Left ventricle myocardium inferior (tissue), 1 donor: ENCODE measurements at regions of chr1 and their contacts with region 1.

Region 1: GRCh38 chr1:192609110-192610079 is 26.6 kb upstream of the RGS13 start:
- DNase-seq: peak; percentile 25
- H3K4me3 ChIP-seq: no peak overlapping the region
- H3K27ac ChIP-seq: no peak overlapping the region
- H3K4me1 ChIP-seq: no peaks in the 10 kb centered on the region
- H3K27me3 ChIP-seq: no peaks in the 10 kb centered on the region
- CTCF ChIP-seq: no peak

Region 2: DNA sequence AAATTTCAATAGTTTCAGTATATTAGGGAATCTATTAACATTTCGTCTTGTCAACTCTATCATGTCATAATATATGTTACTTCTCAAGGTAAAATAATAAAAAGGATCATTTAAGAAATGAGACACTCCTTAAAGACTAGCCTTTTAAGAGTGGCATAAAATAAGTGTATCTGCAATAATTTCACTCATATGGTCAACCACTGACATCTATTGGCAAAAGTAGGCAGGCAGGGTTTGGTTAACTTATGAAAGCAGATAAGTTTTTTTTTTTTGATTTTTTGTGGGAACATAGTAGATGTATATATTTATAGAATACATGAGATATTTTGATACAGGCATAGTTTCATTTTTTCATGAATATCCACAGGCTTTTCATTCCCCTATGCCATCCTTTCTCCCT is 298.1 kb before region 1 on chr1:
- intact Hi-C with region 1: no loop called
- DNase-seq: no peak
- H3K4me3 ChIP-seq: no peak overlapping the region
- H3K27ac ChIP-seq: no peak overlapping the region
- H3K4me1 ChIP-seq: no peaks in the 10 kb centered on the region
- H3K27me3 ChIP-seq: no peaks in the 10 kb centered on the region
- CTCF ChIP-seq: peak; percentile 58

Region 3: DNA sequence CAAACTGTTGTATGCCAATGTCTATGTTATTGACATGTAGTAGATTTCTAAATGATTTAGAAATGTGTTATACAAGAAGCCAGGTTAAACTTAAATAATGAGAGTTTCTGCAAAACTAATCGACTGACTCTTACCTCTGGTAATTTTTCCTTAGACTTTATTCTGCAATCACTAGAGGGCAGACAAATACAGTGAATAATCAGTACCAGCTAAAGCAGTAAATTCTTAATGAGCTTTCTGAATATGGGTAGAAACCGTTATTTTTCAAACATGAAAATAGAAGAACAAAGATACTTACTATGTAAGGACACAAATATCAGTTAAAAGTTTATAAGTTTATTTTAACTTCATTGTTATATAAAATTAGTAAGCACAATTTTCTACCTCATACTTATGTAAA is 131.8 kb before region 1 on chr1:
- intact Hi-C with region 1: loop called (anchors 10 kb)
- DNase-seq: no peak
- H3K4me3 ChIP-seq: no peak overlapping the region
- H3K27ac ChIP-seq: no peak overlapping the region
- H3K4me1 ChIP-seq: peaks cover 14% of the 10 kb centered on the region
- H3K27me3 ChIP-seq: no peaks in the 10 kb centered on the region
- CTCF ChIP-seq: peak; percentile 68